PC-3 (cell line): ENCODE measurements at regions of chr6 and their contacts with region 1.

Region 1: DNA sequence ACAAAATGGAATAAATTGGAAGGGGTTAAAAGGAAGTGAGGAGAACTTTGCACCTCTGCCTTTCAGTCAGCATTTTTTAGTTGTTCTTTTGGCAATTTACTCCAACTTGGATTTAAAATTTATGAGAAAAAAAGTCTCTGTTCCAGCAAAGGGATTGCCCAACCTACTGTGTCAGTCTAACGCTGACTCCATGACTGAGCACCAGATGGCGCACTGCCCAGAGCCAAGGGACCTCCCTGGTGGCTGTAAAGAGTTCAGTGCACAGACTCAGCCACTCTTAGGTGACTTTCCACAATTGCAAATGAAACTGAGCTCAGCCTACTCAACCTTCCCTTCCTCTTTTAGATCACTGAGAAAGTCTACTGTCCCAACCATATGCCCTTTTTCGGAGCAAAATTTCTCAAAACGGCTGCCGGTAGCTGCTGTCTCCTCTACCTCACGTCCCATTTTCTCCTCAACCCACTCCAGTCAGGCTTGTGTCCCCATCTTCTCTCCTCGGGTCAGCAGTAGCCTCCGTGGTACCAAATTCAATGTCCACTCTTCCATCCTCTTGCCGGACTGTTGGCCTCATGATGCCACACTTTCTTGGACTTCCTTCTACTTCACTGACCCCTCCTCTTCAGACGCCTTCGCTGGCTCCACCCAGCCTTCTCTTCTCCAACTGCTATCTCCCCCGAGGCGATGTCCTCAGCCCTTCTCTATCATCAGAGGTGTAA is 38.7 kb downstream of the GSTA2 start:
- DNase-seq: peak; percentile 80
- ATAC-seq: peak; percentile 35; the same call in 1 of the 2 replicates
- H3K4me3 ChIP-seq: peak overlapping the region; percentile 31
- H3K27ac ChIP-seq: peak overlapping the region; percentile 94
- H3K4me1 ChIP-seq: peaks cover 48% of the 10 kb centered on the region
- H3K27me3 ChIP-seq: no peaks in the 10 kb centered on the region
- CTCF ChIP-seq: peak; percentile 86

Region 2: GRCh38 chr6:52707963-52708680 is 16.4 kb before region 1 on chr6:
- CTCF ChIA-PET with region 1: no interaction called
- POLR2A ChIA-PET with region 1: no interaction called
- intact Hi-C with region 1: no loop called
- DNase-seq: no peak
- ATAC-seq: no peak
- H3K4me3 ChIP-seq: no peak overlapping the region
- H3K27ac ChIP-seq: no peak overlapping the region
- H3K4me1 ChIP-seq: no peaks in the 10 kb centered on the region; the same call in 1 of the 2 replicates
- H3K27me3 ChIP-seq: no peaks in the 10 kb centered on the region
- CTCF ChIP-seq: no peak

Region 3: GRCh38 chr6:52759085-52759484 is 34.5 kb after region 1 on chr6:
- CTCF ChIA-PET with region 1: no interaction called
- POLR2A ChIA-PET with region 1: no interaction called
- intact Hi-C with region 1: no loop called
- DNase-seq: no peak
- ATAC-seq: no peak
- H3K4me3 ChIP-seq: no peak overlapping the region
- H3K27ac ChIP-seq: no peak overlapping the region
- H3K4me1 ChIP-seq: no peaks in the 10 kb centered on the region
- H3K27me3 ChIP-seq: no peaks in the 10 kb centered on the region
- CTCF ChIP-seq: no peak

Region 4: GRCh38 chr6:53062169-53062539 is 337.6 kb after region 1 on chr6:
- CTCF ChIA-PET with region 1: no interaction called
- POLR2A ChIA-PET with region 1: no interaction called
- intact Hi-C with region 1: loop called (anchors 1 kb)
- DNase-seq: peak; percentile 16
- ATAC-seq: no peak
- H3K4me3 ChIP-seq: peak overlapping the region; percentile 96
- H3K27ac ChIP-seq: no peak overlapping the region
- H3K4me1 ChIP-seq: peaks cover 47% of the 10 kb centered on the region
- H3K27me3 ChIP-seq: no peaks in the 10 kb centered on the region
- CTCF ChIP-seq: no peak